ENCODE measurements at regions of chr2 and their contacts with region 1.

Region 1: DNA sequence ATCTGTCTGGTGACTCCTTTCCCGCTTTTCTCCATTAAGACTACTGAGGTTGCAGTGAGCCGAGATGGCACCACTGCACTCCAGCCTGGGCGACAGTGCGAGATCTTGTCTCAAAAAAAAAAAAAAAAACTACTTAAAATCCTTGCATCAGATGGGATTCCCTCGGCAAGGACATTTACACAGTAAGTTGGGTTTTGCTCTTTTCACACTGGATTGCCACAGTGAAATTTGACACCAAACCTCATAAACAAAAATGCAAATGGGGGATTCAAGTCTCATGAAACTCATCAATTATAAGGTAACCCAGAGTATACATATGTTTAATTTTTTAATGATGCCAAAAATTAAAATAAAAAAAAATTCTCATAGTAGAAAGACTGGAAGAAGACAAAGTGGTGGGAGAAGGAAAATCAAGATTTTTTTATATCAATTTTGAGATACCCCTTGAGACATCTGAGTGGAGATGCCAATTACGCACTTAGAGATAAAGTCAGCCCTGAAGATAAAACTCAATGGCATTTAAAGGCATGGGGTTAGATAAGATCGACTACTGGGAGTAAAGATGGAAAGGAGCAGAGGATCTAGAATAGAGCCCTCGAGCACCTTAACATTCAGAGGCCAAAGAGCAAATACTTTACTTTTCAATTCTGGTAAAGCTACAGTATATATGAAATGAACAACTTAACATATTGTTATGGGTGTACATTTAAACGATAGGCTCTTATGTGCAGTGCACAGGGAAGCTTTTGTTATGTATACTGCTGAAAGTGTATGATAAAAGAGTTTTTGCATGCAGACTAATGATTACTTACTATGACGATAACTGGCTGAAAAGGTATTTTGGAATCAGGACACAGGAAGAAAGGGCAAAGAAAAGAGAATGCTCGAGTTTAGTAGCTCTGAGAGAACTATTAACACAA is 37.6 kb downstream of the CHMP3 start:
- DNase-seq: no peak
- ATAC-seq: no peak
- H3K4me3 Mint-ChIP-seq: no peak overlapping the region
- H3K27ac Mint-ChIP-seq: no peak overlapping the region
- H3K4me1 Mint-ChIP-seq: no peaks in the 10 kb centered on the region
- H3K27me3 Mint-ChIP-seq: no peaks in the 10 kb centered on the region

Region 2: GRCh38 chr2:86570059-86570458 is 44.4 kb after region 1 on chr2:
- CTCF ChIA-PET with region 1: interaction called, 3 read pairs
- POLR2A ChIA-PET with region 1: no interaction called
- intact Hi-C with region 1: loop called in 1 of 2 experiments (anchors 1 kb)
- DNase-seq: no peak
- ATAC-seq: no peak
- H3K4me3 Mint-ChIP-seq: no peak overlapping the region
- H3K27ac Mint-ChIP-seq: no peak overlapping the region
- H3K4me1 Mint-ChIP-seq: peaks cover 2% of the 10 kb centered on the region
- H3K27me3 Mint-ChIP-seq: no peaks in the 10 kb centered on the region

Region 3: DNA sequence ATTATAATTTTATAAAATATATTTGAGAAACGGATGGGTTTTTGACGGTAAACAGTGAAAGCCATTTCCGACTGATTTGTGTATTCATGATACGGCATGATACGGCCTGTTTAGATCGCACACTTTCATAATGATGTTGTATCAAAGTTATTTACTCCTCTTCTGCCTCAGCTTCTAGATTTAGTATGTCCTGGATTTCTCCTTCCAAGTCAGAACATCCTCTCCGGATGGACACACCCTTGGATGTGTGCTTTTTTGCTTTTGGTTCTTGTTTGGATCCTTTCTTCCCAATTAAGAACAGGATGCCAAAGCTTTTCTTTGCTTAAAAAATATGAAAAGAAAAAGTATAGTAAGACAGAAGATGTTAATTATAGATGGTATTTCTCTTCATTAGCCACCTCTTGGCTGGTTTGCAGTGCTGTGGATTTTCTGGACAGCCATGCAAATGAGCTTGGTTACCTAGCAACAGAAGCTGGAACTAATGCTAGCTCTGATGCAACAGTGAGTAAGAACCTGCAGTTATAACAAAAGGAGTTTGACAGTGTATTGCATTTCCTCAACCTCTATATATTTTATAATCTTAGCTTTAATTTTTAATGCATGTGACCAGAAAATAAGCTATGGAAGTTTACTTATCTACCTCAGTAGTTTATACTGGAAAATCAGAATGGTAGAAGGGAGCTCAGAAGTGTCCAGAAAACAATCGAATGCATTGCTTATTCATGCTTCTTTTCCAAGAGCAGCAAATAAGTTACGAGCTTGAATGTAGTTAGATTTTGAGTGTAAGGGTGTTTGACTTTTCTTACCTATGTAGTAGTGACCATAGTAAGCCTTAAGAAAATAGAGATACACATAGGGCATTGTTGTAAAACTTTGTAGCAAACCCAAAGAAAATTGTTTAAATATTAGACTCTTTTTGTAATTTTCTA is 222.3 kb after region 1 on chr2:
- CTCF ChIA-PET with region 1: no interaction called
- POLR2A ChIA-PET with region 1: no interaction called
- intact Hi-C with region 1: no loop called
- DNase-seq: peak; percentile 41
- ATAC-seq: peak; percentile 86
- H3K4me3 Mint-ChIP-seq: no peak overlapping the region
- H3K27ac Mint-ChIP-seq: peak overlapping the region; percentile 33
- H3K4me1 Mint-ChIP-seq: peaks cover 44% of the 10 kb centered on the region
- H3K27me3 Mint-ChIP-seq: no peaks in the 10 kb centered on the region

Measured in activated CD4-positive, alpha-beta T cell treated with anti-CD3 and anti-CD28 coated beads for 36 hours (primary cell).